ENCODE measurements at regions of chr13 and their contacts with region 1.

Region 1: GRCh38 chr13:77329133-77329910 is 2.4 kb upstream of the MYCBP2 start:
- DNase-seq: peak; percentile 98
- ATAC-seq: peak; percentile 76
- H3K4me3 ChIP-seq: peak overlapping the region; percentile 76
- H3K27ac ChIP-seq: peak overlapping the region; percentile 98
- H3K4me1 ChIP-seq: peaks cover 16% of the 10 kb centered on the region; the same call in 1 of the 2 replicates
- H3K27me3 ChIP-seq: no peaks in the 10 kb centered on the region
- CTCF ChIP-seq: 0 out of 6 replicates have a peak, but pooled peaks of 2 of the 3 experiments have one; percentile 2
- EP300 ChIP-seq: peak; percentile 43 to 86; a peak in 3 of 4 replicates
- POLR2A ChIP-seq: peak; percentile 86
- RAD21 ChIP-seq: peak; percentile 25; the same call in 1 of the 2 replicates

Region 2: GRCh38 chr13:77250975-77251374 is 78.3 kb before region 1 on chr13:
- CTCF ChIA-PET with region 1: no interaction called
- POLR2A ChIA-PET with region 1: no interaction called
- RAD21 ChIA-PET with region 1: no interaction called
- SMC1A ChIA-PET with region 1: no interaction called
- in situ Hi-C with region 1: no loop called
- intact Hi-C with region 1: no loop called
- DNase-seq: no peak
- ATAC-seq: no peak
- H3K4me3 ChIP-seq: no peak overlapping the region
- H3K27ac ChIP-seq: no peak overlapping the region
- H3K4me1 ChIP-seq: no peaks in the 10 kb centered on the region
- H3K27me3 ChIP-seq: no peaks in the 10 kb centered on the region
- CTCF ChIP-seq: no peak
- EP300 ChIP-seq: no peak
- POLR2A ChIP-seq: no peak
- RAD21 ChIP-seq: no peak

Region 3: GRCh38 chr13:77310579-77311279 is 18.6 kb before region 1 on chr13:
- CTCF ChIA-PET with region 1: interaction called, 5 read pairs
- POLR2A ChIA-PET with region 1: interaction called, 6 read pairs
- RAD21 ChIA-PET with region 1: interaction called, 4 read pairs
- SMC1A ChIA-PET with region 1: interaction called, 10 read pairs
- in situ Hi-C with region 1: no loop called
- intact Hi-C with region 1: no loop called
- DNase-seq: no peak
- ATAC-seq: no peak
- H3K4me3 ChIP-seq: no peak overlapping the region
- H3K27ac ChIP-seq: no peak overlapping the region
- H3K4me1 ChIP-seq: peaks cover 15% of the 10 kb centered on the region
- H3K27me3 ChIP-seq: no peaks in the 10 kb centered on the region
- CTCF ChIP-seq: no peak
- EP300 ChIP-seq: no peak
- POLR2A ChIP-seq: no peak
- RAD21 ChIP-seq: no peak

Region 4: DNA sequence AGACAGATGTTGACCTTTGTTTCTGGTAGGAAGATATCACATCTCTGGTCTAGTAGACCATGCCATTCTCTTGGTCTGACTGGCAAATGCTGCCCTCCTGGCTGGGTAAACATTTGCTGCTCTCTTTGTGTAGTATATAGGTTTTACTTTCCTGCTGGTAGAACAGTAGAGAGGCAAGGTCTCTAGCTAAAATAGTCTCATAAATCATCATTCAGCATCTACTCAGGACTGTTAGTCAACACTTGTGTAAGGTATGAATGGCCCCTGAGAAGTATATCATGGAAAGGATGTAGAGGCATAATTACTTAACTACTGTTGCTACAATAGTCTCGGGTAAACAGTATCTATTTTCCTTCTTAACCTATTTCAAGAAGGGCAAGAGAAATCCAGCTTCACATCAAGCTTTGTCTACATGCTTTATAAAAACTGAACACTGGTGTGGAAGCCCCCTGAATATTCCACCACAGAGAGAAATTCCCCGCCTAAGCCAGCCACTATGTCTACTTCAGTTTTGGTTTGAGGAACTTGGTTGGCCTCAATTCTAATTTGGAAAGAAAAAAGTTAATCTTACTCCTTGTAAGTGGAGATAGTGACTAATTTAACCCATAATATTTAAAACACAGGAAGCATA is 15.9 kb after region 1 on chr13:
- CTCF ChIA-PET with region 1: interaction called, 20 read pairs
- POLR2A ChIA-PET with region 1: interaction called, 72 read pairs
- RAD21 ChIA-PET with region 1: interaction called, 85 read pairs
- SMC1A ChIA-PET with region 1: interaction called, 89 read pairs
- in situ Hi-C with region 1: no loop called
- intact Hi-C with region 1: loop called (anchors 2 kb)
- DNase-seq: no peak
- ATAC-seq: peak; percentile 81
- H3K4me3 ChIP-seq: no peak overlapping the region
- H3K27ac ChIP-seq: peak overlapping the region; percentile 49
- H3K4me1 ChIP-seq: peaks cover 13% of the 10 kb centered on the region
- H3K27me3 ChIP-seq: no peaks in the 10 kb centered on the region
- CTCF ChIP-seq: no peak
- EP300 ChIP-seq: peak; percentile 37 to 72; a peak in 1 of 4 replicates
- POLR2A ChIP-seq: no peak
- RAD21 ChIP-seq: peak; percentile 13; the same call in 1 of the 2 replicates

Region 5: DNA sequence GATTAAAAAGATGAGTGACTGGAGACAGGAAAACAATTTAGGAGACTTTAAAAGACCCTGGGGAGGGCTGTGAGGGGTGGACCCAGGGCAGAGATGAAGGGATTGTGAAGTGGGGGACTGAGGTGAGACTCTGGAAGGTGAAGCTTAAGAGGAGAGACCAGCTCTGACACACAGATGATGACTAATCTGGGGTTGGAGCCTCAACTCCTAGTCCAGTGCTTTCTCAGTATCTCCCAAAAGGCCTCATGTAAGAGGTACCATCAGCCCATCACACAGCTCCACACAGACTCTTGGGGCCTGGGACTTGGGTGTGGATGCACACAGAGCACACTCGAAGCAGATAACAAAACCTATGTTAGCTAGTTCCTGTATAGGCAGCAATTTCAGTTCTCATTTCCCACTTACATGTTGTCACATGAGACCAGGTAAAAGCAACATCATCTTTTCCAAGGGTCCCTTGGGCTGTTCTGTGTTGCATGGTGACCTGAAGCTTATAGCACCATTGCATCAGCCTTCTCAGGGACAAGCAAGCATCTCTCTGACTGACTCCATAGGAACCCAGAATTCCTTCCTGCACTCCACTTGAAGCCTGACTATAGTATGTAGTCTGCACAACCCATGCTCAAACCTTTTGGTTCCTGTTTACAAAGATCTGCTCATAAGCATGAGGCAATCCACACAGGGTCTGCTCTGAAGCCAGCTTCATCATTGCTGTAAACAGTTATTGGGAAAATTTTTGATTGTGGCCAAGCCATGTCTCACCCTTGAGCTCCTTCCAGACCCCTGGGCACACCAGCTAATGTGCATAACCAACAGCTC is 86.1 kb after region 1 on chr13:
- CTCF ChIA-PET with region 1: interaction called, 3 read pairs
- POLR2A ChIA-PET with region 1: interaction called, 6 read pairs
- RAD21 ChIA-PET with region 1: interaction called, 18 read pairs
- SMC1A ChIA-PET with region 1: interaction called, 11 read pairs
- in situ Hi-C with region 1: no loop called
- intact Hi-C with region 1: no loop called
- DNase-seq: peak; percentile 45
- ATAC-seq: peak; percentile 93
- H3K4me3 ChIP-seq: no peak overlapping the region
- H3K27ac ChIP-seq: peak overlapping the region; percentile 26; the same call in 1 of the 2 replicates
- H3K4me1 ChIP-seq: peaks cover 10% of the 10 kb centered on the region
- H3K27me3 ChIP-seq: no peaks in the 10 kb centered on the region
- CTCF ChIP-seq: no peak
- EP300 ChIP-seq: no peak
- POLR2A ChIP-seq: 0 out of 2 replicates have a peak, but pooled peaks have one; percentile 32
- RAD21 ChIP-seq: 0 out of 2 replicates have a peak, but pooled peaks have one; percentile 17

Region 6: GRCh38 chr13:77565635-77566034 is 236.3 kb after region 1 on chr13:
- CTCF ChIA-PET with region 1: no interaction called
- POLR2A ChIA-PET with region 1: no interaction called
- RAD21 ChIA-PET with region 1: no interaction called
- SMC1A ChIA-PET with region 1: no interaction called
- in situ Hi-C with region 1: no loop called
- intact Hi-C with region 1: loop called (anchors 5 kb)
- DNase-seq: no peak
- ATAC-seq: peak; percentile 95
- H3K4me3 ChIP-seq: no peak overlapping the region
- H3K27ac ChIP-seq: no peak overlapping the region
- H3K4me1 ChIP-seq: no peaks in the 10 kb centered on the region
- H3K27me3 ChIP-seq: no peaks in the 10 kb centered on the region
- CTCF ChIP-seq: peak; percentile 44 to 76 (median 52); a peak in 5 of 6 replicates
- EP300 ChIP-seq: no peak
- POLR2A ChIP-seq: no peak
- RAD21 ChIP-seq: peak; percentile 95

Region 7: DNA sequence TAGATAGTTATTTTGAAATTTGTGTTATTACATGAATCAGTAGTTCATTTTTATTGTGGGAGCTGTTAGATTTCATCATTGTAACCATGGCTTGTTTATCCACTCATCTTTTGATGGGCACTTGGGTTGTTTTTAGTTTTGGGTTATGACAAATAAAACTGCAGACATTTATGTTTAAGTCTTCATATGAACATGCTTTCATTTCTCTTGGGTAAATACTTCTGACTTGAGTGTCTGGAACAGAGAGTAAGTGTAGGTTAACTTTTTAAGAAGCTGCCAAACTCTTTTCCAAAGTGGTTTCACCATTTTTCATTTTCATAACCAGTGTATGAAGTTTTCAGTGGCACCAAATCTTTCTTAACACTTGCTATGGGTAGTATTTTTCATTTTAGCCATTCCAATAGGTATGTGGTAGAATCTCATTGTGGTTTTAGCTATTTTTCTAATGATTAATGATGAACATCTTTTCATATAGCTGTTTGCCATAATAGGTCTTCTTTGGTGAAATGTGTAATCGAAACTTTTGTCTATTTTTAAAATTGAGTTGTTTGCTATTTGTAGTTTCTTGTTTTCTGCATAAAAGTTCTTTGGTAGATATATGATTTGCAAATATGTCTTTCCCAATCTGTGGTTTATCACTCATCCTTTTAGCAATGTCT is 386.0 kb after region 1 on chr13:
- CTCF ChIA-PET with region 1: no interaction called
- POLR2A ChIA-PET with region 1: no interaction called
- RAD21 ChIA-PET with region 1: no interaction called
- SMC1A ChIA-PET with region 1: interaction called, 4 read pairs
- in situ Hi-C with region 1: loop called (anchors 10 kb)
- intact Hi-C with region 1: no loop called
- DNase-seq: no peak
- ATAC-seq: peak; percentile 65
- H3K4me3 ChIP-seq: no peak overlapping the region
- H3K27ac ChIP-seq: peak overlapping the region; percentile 17
- H3K4me1 ChIP-seq: peaks cover 12% of the 10 kb centered on the region
- H3K27me3 ChIP-seq: no peaks in the 10 kb centered on the region
- CTCF ChIP-seq: no peak
- EP300 ChIP-seq: no peak; a peak in 1 of 4 replicates
- POLR2A ChIP-seq: no peak
- RAD21 ChIP-seq: no peak

Region 8: GRCh38 chr13:78364711-78365110 is 1035.4 kb after region 1 on chr13:
- CTCF ChIA-PET with region 1: no interaction called
- POLR2A ChIA-PET with region 1: no interaction called
- RAD21 ChIA-PET with region 1: no interaction called
- SMC1A ChIA-PET with region 1: no interaction called
- in situ Hi-C with region 1: no loop called
- intact Hi-C with region 1: no loop called
- DNase-seq: no peak
- ATAC-seq: no peak
- H3K4me3 ChIP-seq: no peak overlapping the region
- H3K27ac ChIP-seq: no peak overlapping the region
- H3K4me1 ChIP-seq: no peaks in the 10 kb centered on the region
- H3K27me3 ChIP-seq: no peaks in the 10 kb centered on the region
- CTCF ChIP-seq: no peak
- EP300 ChIP-seq: no peak
- POLR2A ChIP-seq: no peak
- RAD21 ChIP-seq: no peak

Measured in GM12878 (cell line).